ENCODE measurements at regions of chr17 and their contacts with region 1.

Region 1: DNA sequence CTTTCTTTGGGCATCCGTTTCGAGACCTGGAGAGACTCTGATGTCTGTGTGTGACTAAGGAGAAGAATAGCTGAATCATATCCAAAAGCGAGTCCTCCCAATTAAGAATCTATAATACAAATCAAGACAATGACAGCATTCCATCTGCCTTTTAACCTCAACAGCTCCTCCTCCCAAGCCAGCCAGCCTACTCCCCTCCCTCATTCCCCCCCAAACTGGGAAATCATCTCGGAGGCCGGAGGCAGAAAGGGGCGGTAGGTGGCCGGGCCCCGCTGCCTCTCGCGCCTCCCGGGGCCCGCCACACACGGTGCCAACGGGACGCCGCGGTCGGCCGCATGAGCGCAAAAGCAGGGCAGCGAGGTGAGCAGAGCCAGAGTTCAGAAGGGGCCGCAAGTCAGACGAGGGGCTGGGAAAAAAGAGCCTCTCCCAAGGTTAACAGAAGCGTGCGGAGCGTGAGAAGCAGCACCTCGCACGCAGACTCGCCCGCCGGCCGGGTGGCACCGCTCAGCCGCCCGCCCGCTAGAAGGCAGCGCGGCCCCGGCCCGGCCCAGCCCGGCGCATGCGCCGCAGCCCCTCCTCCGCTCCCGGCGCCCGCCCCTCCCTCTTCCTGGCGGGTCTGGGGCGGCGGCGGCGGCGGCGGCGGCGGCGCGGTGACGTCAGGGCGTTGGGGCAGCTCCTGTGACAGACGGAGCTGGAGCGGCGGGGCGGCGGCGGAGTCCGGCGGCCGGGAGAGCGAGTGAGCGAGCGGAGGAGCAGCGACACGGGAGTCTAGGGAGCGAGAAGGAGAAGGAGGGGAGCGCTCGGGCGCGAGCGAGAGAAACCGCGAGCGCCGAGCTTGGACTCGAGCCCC is at the start of gene PAFAH1B1:
- DNase-seq: peak; percentile 94 to 97 (median 96)
- ATAC-seq: peak; percentile 76 to 96 (median 92)
- H3K4me3 ChIP-seq: peak within 1 kb of the TSS; percentile 75 to 100 (median 95)
- H3K27ac ChIP-seq: peak within 1 kb of the TSS; percentile 95 to 100 (median 99)
- H3K4me1 ChIP-seq: peaks cover 4 to 47% (median 38%) of the 10 kb centered on the region in 12 donors
- H3K27me3 ChIP-seq: no peaks in the 10 kb centered on the region
- CTCF ChIP-seq: peak in 5 of 12 donors; percentile 12 to 48 (median 45)
- POLR2A ChIP-seq: peak in 1 of 2 donors; percentile 81
- total RNA-seq, gene PAFAH1B1: 80.5 to 154 (median 121) TPM

Region 2: GRCh38 chr17:2029911-2030778 is 563.1 kb before region 1 on chr17 and contains the start of gene DPH1:
- intact Hi-C with region 1: no loop called
- DNase-seq: peak; percentile 90 to 94 (median 92)
- ATAC-seq: peak; percentile 83 to 93 (median 88)
- H3K4me3 ChIP-seq: peak within 1 kb of the TSS; percentile 64 to 100 (median 91)
- H3K27ac ChIP-seq: peak within 1 kb of the TSS in 10 of 12 donors; percentile 44 to 87 (median 72)
- H3K4me1 ChIP-seq: peaks cover 10 to 48% (median 29%) of the 10 kb centered on the region in 12 donors
- H3K27me3 ChIP-seq: peaks cover 0 to 29% (median 0%) of the 10 kb centered on the region in 9 donors
- CTCF ChIP-seq: no peak
- POLR2A ChIP-seq: peak in 1 of 2 donors; percentile 65
- total RNA-seq, gene DPH1: 14.0 to 38.1 (median 27.6) TPM

Region 3: GRCh38 chr17:2547176-2547575 is 46.0 kb before region 1 on chr17:
- intact Hi-C with region 1: loop called in 1 of 10 experiments (anchors 5 kb)
- DNase-seq: no peak
- ATAC-seq: no peak
- H3K4me3 ChIP-seq: no peak overlapping the region
- H3K27ac ChIP-seq: no peak overlapping the region
- H3K4me1 ChIP-seq: peaks cover 0 to 8% (median 0%) of the 10 kb centered on the region in 12 donors
- H3K27me3 ChIP-seq: peaks cover 0 to 7% (median 0%) of the 10 kb centered on the region in 9 donors
- CTCF ChIP-seq: no peak
- POLR2A ChIP-seq: no peak

Region 4: GRCh38 chr17:2560658-2561057 is 32.5 kb before region 1 on chr17:
- intact Hi-C with region 1: no loop called
- DNase-seq: no peak
- ATAC-seq: peak in 2 of 4 donors; percentile 13 to 49
- H3K4me3 ChIP-seq: no peak overlapping the region
- H3K27ac ChIP-seq: peak overlapping the region in 1 of 12 donors; percentile 35
- H3K4me1 ChIP-seq: no peaks in the 10 kb centered on the region
- H3K27me3 ChIP-seq: no peaks in the 10 kb centered on the region
- CTCF ChIP-seq: no peak
- POLR2A ChIP-seq: no peak

Region 5: DNA sequence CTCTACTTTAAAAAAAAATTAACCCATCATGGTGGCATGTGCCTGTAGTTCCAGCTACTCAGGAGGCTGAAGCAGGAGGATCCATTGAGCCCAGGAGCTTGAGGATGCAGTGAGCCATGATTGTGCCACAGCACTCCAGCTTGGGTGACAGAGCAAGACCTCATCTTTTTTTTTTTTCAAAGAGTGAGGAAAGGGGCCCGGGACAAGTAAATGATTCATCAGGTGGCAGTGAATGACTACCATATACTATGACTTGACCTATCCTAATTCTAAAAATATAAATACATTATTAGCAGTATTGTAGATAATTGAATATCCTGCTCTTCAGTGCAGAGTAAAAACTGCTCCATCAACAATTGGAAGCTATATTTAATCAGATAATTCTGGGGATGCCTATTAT is 63.1 kb after region 1 on chr17:
- intact Hi-C with region 1: loop called in 1 of 10 experiments (anchors 10 kb)
- DNase-seq: no peak
- ATAC-seq: no peak
- H3K4me3 ChIP-seq: no peak overlapping the region
- H3K27ac ChIP-seq: no peak overlapping the region
- H3K4me1 ChIP-seq: peaks cover 0 to 41% (median 10%) of the 10 kb centered on the region in 12 donors
- H3K27me3 ChIP-seq: no peaks in the 10 kb centered on the region
- CTCF ChIP-seq: no peak
- POLR2A ChIP-seq: no peak

Region 6: GRCh38 chr17:2688351-2689342 is 95.5 kb after region 1 on chr17:
- intact Hi-C with region 1: loop called in 1 of 10 experiments (anchors 10 kb)
- DNase-seq: peak in 3 of 5 donors; percentile 16 to 64 (median 33)
- ATAC-seq: peak; percentile 19 to 42 (median 24)
- H3K4me3 ChIP-seq: no peak overlapping the region
- H3K27ac ChIP-seq: peak overlapping the region in 10 of 12 donors; percentile 5 to 81 (median 28)
- H3K4me1 ChIP-seq: peaks cover 0 to 52% (median 24%) of the 10 kb centered on the region in 12 donors
- H3K27me3 ChIP-seq: no peaks in the 10 kb centered on the region
- CTCF ChIP-seq: no peak
- POLR2A ChIP-seq: no peak

Measured in heart left ventricle (tissue), 16 donors.